ENCODE measurements at regions of chr3 and their contacts with region 1.

Region 1: GRCh38 chr3:33372218-33373081 is 67.8 kb downstream of the UBP1 start:
- DNase-seq: peak in 36 of 42 donors; percentile 15 to 85 (median 58)

Region 2: GRCh38 chr3:33131331-33132018 is 241.0 kb before region 1 on chr3:
- intact Hi-C with region 1: loop called (anchors 2 kb)
- DNase-seq: peak in 30 of 42 donors; percentile 30 to 84 (median 62)

Region 3: DNA sequence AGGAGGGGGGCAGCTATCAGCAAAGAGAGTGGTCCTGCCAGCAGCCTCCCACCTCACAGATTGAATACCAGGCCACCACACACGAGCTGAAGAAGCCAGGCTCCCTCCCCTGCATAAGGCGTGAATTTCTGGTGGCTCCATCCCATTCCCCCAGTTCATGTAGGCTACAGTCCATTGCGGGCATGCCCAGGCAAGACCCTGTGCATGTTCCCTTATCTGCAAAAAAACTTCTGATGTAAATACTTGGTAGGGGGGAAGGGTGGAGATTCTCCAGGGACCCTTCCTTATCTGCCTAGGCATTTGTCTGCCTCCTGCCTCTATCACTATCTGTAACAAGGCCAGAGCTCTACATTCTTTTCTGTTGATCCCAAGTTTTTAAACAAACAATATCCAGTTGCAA is 95.3 kb after region 1 on chr3:
- intact Hi-C with region 1: no loop called
- DNase-seq: no peak